HEK293 (cell line): ENCODE measurements at regions of chr6 and their contacts with region 1.

Region 1: GRCh38 chr6:158213925-158214674 is 46.0 kb downstream of the GTF2H5 start:
- H3K4me3 ChIP-seq: no peak overlapping the region
- H3K27ac ChIP-seq: no peak overlapping the region
- H3K4me1 ChIP-seq: no peaks in the 10 kb centered on the region
- CTCF ChIP-seq: peak; percentile 76

Region 2: GRCh38 chr6:158518191-158519127 is 304.4 kb after region 1 on chr6:
- CTCF ChIA-PET with region 1: interaction called, 11 read pairs
- POLR2A ChIA-PET with region 1: no interaction called
- H3K4me3 ChIP-seq: peak overlapping the region; percentile 35
- H3K27ac ChIP-seq: no peak overlapping the region; the same call in 1 of the 2 replicates
- H3K4me1 ChIP-seq: 0 out of 2 replicates have a peak, but pooled peaks cover 4% of the 10 kb centered on the region
- CTCF ChIP-seq: 0 out of 2 replicates have a peak, but pooled peaks have one; percentile 33

Region 3: DNA sequence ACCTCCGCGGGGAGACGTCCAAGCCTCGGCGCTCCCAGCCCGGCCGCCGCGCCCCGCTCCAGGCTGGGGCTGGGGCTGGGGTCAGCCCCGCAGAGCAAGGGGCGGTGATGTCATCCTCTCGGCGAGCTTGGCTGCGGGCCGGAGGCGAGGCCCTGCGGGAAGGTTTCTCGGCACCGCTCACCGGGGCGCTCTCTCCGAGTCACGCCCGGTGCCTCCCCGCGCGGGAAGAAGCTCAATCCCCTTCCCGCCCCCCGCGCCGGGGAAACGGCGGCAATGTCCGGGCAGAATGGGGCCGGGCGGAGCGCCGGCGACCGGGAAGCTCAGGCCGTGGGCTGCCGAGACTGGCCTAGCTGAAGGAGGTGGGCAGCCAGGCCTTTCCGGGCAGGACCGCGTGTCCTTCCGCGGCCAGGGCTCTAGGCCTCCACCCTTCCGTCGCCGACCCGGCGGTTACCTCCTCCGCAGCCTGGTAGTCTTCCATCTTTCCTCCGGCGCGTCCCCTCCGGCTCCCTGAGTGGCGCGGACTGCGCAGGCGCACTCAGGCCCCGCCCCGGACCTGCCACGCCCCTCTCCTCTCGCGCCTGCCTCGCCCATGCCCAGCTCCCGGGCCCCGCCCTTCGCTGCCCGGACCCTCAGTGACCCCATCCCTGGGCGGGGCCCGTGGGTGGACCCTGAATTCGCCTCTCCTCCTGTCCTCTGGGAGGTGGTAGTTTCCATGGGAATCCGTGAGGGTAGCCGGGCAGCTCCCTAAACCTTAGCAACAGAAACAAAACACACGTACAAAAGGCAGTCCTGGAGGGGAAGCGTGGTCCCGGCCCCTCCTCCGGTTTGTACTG is 430.3 kb after region 1 on chr6 and contains the start of gene DYNLT1:
- CTCF ChIA-PET with region 1: interaction called, 11 read pairs
- POLR2A ChIA-PET with region 1: interaction called, 3 read pairs
- H3K4me3 ChIP-seq: peak within 1 kb of the TSS; percentile 80
- H3K27ac ChIP-seq: peak within 1 kb of the TSS; percentile 79
- H3K4me1 ChIP-seq: peaks cover 14% of the 10 kb centered on the region
- CTCF ChIP-seq: 0 out of 2 replicates have a peak, but pooled peaks have one; percentile 5

Region 4: DNA sequence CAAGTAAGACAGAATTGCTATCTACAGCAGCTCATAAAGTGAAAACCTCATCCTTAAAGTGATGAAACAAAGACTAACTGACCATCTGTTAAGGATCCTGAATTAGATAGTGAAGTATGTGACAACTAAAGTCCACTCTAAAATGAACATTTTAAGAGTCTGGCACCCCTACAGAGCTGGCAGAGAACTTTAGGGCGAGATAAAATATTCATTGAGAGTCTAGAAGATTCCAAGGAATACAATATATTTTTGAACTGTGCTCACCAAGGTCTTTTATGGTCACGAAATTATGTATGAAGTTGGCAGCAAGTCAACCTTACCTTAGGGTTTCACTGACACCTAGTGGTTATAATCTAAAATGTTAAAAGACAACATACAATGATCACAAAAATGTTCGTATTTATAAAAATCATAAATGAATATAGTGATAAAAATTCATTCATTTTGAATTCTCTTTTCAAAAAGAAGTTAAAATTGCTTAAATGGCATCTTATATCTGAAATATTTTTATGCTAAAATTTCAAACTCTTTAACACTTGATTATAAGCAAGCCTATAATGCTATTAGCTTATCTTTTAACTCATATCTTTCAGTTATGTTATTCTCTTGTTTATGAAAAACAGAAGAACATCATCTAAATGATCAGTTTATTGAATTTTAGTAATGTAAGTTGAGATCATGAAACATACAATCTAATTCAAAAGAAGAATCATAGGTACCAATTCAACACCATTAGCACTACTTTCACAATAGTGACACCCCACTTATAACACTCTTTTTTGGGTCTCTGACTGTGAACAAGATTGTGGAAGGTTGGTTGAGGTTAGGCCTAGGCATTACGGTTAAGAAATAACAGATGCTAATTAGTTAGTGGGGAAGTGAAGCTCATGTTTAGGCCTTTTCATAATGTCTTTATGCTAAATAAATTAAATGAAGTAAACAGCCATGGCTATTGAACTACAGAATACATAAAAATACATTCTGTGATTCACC is 758.4 kb after region 1 on chr6:
- CTCF ChIA-PET with region 1: interaction called, 16 read pairs
- POLR2A ChIA-PET with region 1: no interaction called
- H3K4me3 ChIP-seq: no peak overlapping the region
- H3K27ac ChIP-seq: no peak overlapping the region
- H3K4me1 ChIP-seq: no peaks in the 10 kb centered on the region
- CTCF ChIP-seq: no peak